GM10248 (cell line): ENCODE measurements at regions of chr14 and their contacts with region 1.

Region 1: GRCh38 chr14:77151918-77152588 is 10.5 kb upstream of the ZDHHC22 start:
- DNase-seq: peak; percentile 64
- CTCF ChIP-seq: no peak

Region 2: GRCh38 chr14:77133720-77134338 is 18.2 kb before region 1 on chr14:
- CTCF ChIA-PET with region 1: interaction called, 25 read pairs
- POLR2A ChIA-PET with region 1: no interaction called
- DNase-seq: peak; percentile 83
- CTCF ChIP-seq: no peak

Region 3: DNA sequence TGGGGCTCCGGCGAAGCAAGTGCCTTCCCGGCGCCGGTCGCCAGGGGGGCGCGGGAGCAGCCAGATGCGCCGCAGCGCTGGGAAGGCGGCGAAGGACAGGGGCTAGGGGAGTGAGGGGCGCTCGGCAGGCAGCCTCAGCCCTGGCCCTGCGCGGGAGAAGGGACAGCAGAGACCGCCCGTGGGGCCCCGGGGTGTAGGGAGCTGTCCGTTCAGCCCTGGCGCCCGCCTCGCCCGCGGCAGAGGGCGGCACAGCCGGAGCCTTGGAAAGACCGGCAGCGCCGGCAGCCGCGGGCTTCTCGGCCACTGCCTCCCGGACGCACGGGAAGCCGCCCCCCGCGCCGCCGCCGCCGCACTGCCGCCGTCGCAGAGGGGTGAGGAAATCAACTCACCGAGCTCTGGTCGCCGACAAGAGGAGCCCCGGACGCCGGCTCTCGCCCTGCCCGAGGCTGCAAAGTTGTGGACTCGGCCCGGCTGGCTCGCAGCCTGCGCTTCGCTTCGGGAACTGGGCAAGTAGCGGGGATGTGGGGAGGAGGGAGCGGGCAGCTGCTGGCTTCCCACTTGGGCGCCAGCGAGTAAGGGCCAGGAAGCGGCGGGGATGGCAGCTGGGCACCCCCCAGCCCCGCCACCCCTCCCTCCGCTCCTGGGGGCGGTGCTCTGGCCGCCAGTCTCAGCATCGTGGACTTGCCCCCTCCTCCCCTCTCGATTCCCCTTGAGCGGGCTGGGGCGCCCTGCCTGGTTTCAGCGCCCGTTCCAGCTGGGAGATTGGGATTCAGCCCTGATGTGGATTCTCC is 10.6 kb before region 1 on chr14 and contains the start of gene ZDHHC22:
- CTCF ChIA-PET with region 1: interaction called, 25 read pairs
- POLR2A ChIA-PET with region 1: no interaction called
- DNase-seq: no peak
- CTCF ChIP-seq: no peak

Region 4: DNA sequence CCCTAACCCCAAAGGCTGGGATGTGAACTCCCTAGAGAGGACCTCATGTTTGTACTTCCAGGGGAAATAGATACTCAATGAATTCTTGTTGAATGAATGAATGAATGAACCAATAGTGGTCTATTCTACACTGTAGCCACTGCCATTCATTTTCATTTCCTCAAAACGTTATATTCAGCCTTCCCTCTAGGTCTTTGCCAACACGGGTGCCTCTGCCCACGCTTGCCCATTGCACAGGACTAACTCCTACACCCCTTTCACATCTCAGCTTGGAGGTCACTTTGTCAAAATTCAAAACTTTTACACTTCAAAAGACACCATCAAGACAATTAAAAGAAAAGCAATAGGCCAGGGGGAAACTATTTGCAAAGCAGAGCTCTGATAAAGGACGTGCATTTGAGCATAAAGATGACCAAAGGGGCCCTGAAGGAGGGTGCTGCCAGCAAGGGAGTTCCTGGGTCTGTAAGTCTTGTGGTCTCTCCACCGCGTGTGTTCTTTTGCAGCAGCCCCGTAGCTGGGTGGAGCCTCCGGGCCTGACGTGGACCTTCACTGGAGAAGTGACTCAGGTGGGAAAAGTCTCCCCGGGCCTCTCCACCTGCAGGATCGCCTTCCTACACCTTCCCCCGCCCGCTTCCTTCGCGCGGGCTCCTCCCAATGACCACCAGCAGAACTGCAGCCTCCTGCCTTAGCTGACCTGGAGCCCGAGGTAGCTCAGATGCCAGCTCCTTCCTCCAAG is 61.1 kb after region 1 on chr14:
- CTCF ChIA-PET with region 1: interaction called, 28 read pairs
- POLR2A ChIA-PET with region 1: no interaction called
- DNase-seq: peak; percentile 75
- CTCF ChIP-seq: peak; percentile 87

Region 5: GRCh38 chr14:77260631-77261030 is 108.6 kb after region 1 on chr14:
- CTCF ChIA-PET with region 1: no interaction called
- POLR2A ChIA-PET with region 1: no interaction called
- DNase-seq: no peak
- CTCF ChIP-seq: no peak